ENCODE measurements at regions of chr7 and their contacts with region 1.

Region 1: DNA sequence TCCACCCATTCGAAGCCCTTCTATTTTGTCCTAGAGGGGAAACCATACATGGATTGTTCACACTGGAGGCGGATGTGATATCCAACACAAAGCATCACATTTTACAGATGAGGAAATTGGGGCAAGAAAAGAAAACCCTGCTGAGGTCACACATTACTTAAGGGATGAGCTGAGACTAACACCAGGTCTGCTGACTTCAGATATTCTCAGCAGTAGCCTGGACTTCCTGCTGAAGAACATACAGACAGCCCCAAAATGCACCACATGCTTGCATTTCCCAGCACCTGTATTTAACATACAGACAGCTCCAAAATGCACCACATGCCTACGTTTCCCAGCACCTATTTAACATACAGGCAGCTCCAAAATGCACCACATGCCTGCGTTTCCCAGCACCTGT is 11.2 kb downstream of the GIMAP5 start:
- DNase-seq: peak in 2 of 9 experiments; percentile 44 to 68
- ATAC-seq: peak; percentile 52
- H3K4me3 ChIP-seq: no peak overlapping the region
- H3K4me3 Mint-ChIP-seq: peak overlapping the region; percentile 20
- H3K27ac ChIP-seq: peak overlapping the region; percentile 11 to 65
- H3K27ac Mint-ChIP-seq: peak overlapping the region; percentile 97
- H3K4me1 ChIP-seq: peaks cover 94% of the 10 kb centered on the region
- H3K4me1 Mint-ChIP-seq: peaks cover 91% of the 10 kb centered on the region
- H3K27me3 ChIP-seq: no peaks in the 10 kb centered on the region
- H3K27me3 Mint-ChIP-seq: no peaks in the 10 kb centered on the region
- CTCF ChIP-seq: no peak

Region 2: DNA sequence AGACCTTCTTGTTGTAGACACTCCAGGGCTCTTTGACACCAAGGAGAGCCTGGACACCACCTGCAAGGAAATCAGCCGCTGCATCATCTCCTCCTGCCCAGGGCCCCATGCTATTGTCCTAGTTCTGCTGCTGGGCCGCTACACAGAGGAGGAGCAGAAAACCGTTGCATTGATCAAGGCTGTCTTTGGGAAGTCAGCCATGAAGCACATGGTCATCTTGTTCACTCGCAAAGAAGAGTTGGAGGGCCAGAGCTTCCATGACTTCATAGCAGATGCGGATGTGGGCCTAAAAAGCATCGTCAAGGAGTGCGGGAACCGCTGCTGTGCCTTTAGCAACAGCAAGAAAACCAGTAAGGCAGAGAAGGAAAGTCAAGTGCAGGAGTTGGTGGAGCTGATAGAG is 228.2 kb before region 1 on chr7:
- CTCF ChIA-PET with region 1: interaction called, 3 read pairs
- POLR2A ChIA-PET with region 1: interaction called, 30 read pairs
- intact Hi-C with region 1: no loop called
- DNase-seq: peak in 6 of 9 experiments; percentile 9 to 75 (median 33)
- ATAC-seq: peak; percentile 27
- H3K4me3 ChIP-seq: peak overlapping the region; percentile 58 to 76
- H3K4me3 Mint-ChIP-seq: peak overlapping the region; percentile 100
- H3K27ac ChIP-seq: peak overlapping the region; percentile 58 to 75
- H3K27ac Mint-ChIP-seq: peak overlapping the region; percentile 91
- H3K4me1 ChIP-seq: peaks cover 12% of the 10 kb centered on the region
- H3K4me1 Mint-ChIP-seq: peaks cover 44% of the 10 kb centered on the region
- H3K27me3 ChIP-seq: no peaks in the 10 kb centered on the region
- H3K27me3 Mint-ChIP-seq: no peaks in the 10 kb centered on the region
- CTCF ChIP-seq: no peak